ENCODE measurements at regions of chr2 and their contacts with region 1.

Region 1: GRCh38 chr2:42810121-42810970 is 18.0 kb upstream of the HAAO start:
- DNase-seq: peak; percentile 91
- H3K4me3 ChIP-seq: peak overlapping the region; percentile 70
- CTCF ChIP-seq: no peak

Region 2: DNA sequence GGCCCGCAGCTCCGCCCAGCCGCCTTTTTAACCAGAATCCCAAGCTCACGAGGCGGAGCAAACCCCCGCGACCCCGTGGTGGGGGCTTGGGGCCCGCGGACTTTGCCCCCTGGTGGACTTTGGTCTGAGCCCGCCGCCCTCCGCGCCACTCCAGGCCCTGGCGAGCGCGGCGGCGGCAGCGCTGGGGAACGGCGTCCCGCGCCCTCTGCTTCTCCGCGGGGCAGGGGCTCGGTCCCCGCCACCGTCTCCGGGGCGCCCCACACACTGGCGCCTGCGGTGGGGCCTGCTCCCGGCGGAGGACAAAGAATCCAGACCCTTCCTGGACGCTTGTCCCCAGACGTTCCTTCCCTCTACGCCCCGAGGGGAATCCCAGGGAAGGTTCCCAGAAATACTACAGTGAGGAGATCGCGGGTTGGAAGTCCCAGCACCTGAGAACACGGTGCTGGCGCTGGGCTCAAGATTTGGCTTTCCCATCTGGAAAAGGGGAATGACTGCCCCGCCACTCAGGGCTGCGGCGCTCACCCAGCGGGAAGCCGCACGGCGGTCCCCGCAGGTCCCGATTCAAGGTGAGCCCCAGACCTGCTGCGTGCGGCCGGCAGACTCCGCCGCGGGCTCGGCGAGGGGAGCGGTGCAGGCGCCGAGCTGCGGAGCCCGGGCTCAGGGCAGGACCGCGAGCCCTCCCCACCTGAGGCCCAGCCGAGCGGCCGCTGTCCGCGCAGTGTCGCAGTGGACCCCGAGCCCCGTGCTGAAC is 17.6 kb before region 1 on chr2 and contains the start of gene HAAO:
- CTCF ChIA-PET with region 1: interaction called, 22 read pairs
- POLR2A ChIA-PET with region 1: interaction called, 5 read pairs
- DNase-seq: no peak
- H3K4me3 ChIP-seq: peak within 1 kb of the TSS; percentile 46
- CTCF ChIP-seq: peak; percentile 10

Measured in AG04449 (cell line).